ENCODE measurements at regions of chr9 and their contacts with region 1.

Region 1: DNA sequence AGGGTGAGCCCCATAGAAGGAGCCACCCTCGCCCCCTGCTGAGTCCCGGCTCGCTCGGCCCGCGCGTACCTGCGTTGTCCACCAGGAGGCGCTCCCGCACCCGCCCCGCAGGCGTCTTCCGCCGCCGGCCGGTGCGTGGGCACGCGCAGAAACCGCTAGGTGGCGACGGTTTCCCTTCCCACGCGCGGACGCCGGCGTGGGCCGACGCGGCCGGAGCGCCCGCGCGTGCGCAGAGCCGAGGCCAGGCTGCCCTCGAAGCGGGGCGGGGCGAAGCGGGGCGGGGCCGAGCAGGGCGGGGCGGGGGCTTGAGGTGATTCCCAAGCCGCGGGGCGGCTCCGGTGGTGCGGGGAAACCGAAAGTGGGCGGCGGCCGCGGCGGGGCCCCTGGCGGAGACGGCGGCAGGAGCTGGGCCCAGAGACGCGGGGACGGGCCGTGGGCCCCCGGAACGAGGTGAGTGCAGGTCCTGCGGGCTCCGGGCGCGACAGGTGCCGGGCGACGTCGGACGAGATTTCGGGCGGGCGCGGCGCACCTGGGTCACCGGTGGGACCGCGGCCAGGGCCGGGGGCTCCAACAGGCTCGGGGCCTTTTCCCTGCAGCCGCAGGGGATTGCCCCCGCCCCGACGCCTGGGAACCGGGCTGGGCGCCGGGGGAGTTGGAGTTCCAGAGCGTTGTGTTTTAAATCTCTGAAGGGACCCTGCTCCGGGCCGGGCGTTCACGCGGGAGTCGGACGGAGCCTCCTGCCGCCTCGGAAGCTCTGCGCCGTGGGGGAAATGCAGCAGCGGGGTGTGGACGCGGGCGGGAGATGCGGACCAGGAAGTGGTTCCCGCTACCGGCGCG is at the start of gene TDRD7:
- DNase-seq: peak; percentile 84 to 94 (median 92)
- H3K4me3 ChIP-seq: peak within 1 kb of the TSS; percentile 90
- H3K27ac ChIP-seq: peak within 1 kb of the TSS; percentile 37 to 52
- H3K4me1 ChIP-seq: peaks cover 4% of the 10 kb centered on the region
- H3K27me3 ChIP-seq: no peaks in the 10 kb centered on the region
- CTCF ChIP-seq: peak; percentile 97 to 99 (median 97)
- EP300 ChIP-seq: no peak
- POLR2A ChIP-seq: peak; percentile 18
- total RNA-seq, gene TDRD7: 9.0 to 13.0 (median 9.8) TPM

Region 2: DNA sequence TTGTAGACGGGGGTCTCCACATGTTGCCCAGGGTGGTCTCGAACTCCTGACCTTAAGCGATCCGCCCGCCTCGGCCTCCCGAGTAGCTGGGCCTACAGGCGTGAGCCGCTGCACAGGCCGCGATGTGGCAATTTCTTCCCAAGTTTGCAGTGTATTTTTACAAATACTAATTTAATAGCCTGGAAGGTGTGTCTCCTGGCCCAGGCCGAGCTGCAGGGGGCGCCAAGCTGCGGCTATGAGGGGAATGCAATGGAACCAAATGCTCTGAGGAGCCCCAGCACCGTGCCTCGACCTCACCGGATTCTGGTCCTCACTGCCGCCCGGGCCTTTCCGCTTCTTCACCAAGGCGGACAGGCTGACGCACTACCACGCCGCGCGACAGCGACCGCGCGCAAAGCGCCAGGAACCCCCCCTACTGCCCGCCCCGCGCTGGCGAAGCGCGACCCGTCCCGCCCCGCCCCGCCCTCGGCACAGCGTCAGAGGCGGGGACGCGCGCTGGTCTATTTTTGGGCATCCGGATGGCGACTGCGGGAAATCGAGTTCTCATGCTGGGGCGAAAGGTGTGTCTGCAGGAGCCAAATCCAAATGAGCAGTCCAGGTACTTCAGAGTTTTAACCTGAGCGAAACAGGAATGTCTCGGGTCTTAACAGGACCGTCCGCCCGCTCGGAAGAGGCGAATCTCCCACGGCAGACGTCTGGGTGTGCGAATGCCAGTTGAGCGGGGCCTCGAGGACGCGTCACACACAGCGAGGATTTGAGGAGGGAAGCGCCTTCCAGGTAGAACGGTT is 725.3 kb before region 1 on chr9:
- intact Hi-C with region 1: loop called in 1 of 4 experiments (anchors 10 kb)
- DNase-seq: peak; percentile 43 to 77 (median 69)
- H3K4me3 ChIP-seq: peak overlapping the region; percentile 48
- H3K27ac ChIP-seq: peak overlapping the region in 1 of 2 donors; percentile 42
- H3K4me1 ChIP-seq: no peaks in the 10 kb centered on the region
- H3K27me3 ChIP-seq: no peaks in the 10 kb centered on the region
- CTCF ChIP-seq: peak in 2 of 3 donors; percentile 39 to 49
- EP300 ChIP-seq: no peak
- POLR2A ChIP-seq: no peak

Region 3: GRCh38 chr9:97615439-97616072 is 203.5 kb after region 1 on chr9:
- intact Hi-C with region 1: loop called in 1 of 4 experiments (anchors 5 kb)
- DNase-seq: peak in 4 of 5 donors; percentile 36 to 79 (median 56)
- H3K4me3 ChIP-seq: no peak overlapping the region
- H3K27ac ChIP-seq: peak overlapping the region in 1 of 2 donors; percentile 12
- H3K4me1 ChIP-seq: no peaks in the 10 kb centered on the region
- H3K27me3 ChIP-seq: no peaks in the 10 kb centered on the region
- CTCF ChIP-seq: peak; percentile 81 to 88 (median 88)
- EP300 ChIP-seq: no peak
- POLR2A ChIP-seq: no peak

Measured in ovary (tissue), 10 donors.